CD4-positive, alpha-beta memory T cell (primary cell): ENCODE measurements at regions of chr6 and their contacts with region 1.

Region 1: GRCh38 chr6:3162565-3163247 is 5.4 kb upstream of the TUBB2A start:
- DNase-seq: peak; percentile 48 to 72 (median 55)
- H3K4me3 ChIP-seq: peak overlapping the region; percentile 53 to 61
- H3K4me3 Mint-ChIP-seq: peak overlapping the region; percentile 84 to 91 (median 85)
- H3K27ac ChIP-seq: peak overlapping the region; percentile 58
- H3K27ac Mint-ChIP-seq: peak overlapping the region; percentile 81 to 97 (median 87)
- H3K4me1 ChIP-seq: peaks cover 35% of the 10 kb centered on the region
- H3K4me1 Mint-ChIP-seq: peaks cover 27 to 49% (median 33%) of the 10 kb centered on the region in 4 donors
- H3K27me3 ChIP-seq: no peaks in the 10 kb centered on the region
- H3K27me3 Mint-ChIP-seq: peaks cover 0 to under 1% of the 10 kb centered on the region in 2 donors

Region 2: DNA sequence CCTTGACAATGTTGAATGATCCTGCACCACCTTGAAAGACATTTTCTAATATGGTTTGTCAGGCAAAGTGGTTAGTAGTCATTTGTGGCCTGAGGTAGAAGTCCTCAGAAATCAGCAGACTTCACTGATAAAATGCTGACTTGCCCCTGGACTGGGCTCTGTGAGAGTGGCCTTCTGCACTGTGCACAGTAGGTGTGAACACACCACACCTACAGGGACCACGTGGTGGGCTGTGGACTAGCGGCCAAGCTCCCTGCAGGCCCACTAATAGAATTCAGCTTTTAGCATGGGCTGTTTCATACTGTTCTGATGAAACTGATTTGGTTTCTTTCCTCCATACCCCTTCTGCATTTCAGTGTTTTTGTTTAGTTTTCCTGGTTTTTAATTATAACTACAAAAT is 36.9 kb before region 1 on chr6:
- CTCF ChIA-PET with region 1: interaction called, 6 read pairs
- POLR2A ChIA-PET with region 1: no interaction called
- intact Hi-C with region 1: loop called (anchors 1 kb)
- DNase-seq: no peak
- H3K4me3 ChIP-seq: no peak overlapping the region
- H3K4me3 Mint-ChIP-seq: no peak overlapping the region
- H3K27ac ChIP-seq: no peak overlapping the region
- H3K27ac Mint-ChIP-seq: no peak overlapping the region
- H3K4me1 ChIP-seq: no peaks in the 10 kb centered on the region
- H3K4me1 Mint-ChIP-seq: peaks cover 0 to 4% (median 0%) of the 10 kb centered on the region in 4 donors
- H3K27me3 ChIP-seq: no peaks in the 10 kb centered on the region
- H3K27me3 Mint-ChIP-seq: no peaks in the 10 kb centered on the region

Region 3: DNA sequence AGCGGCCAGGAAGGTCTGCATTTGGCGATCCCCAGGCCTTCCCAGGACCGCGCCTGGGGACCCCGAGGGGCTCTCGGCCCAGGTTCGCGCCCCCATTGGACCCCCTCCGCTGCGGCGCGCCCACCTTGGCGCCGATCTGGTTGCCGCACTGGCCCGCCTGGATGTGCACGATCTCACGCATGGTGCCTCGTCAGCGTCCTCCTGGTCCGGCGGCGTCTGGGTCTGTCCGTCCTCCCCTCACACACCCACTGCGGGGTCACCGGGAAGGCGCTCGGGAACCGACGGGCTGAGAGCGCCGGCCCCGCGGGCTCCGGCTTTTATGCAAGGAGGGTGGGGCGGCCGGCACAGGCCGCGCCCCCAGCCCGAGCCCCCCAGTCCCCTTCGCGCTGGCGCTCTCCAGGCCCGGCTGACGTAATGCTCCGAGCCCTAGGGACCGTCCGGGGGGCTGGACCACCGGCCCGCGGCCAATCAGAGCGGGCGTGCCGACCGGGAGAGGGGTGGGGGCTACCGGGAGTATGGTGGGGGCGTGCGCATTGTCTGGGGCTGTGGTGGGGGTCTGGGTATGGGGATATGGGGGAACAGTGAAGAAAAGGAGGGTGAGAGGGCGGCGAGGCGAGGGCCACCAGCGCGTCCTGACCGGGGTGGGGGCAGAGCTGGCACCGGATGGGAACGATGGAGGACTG is 64.8 kb after region 1 on chr6 and contains the start of gene TUBB2B:
- CTCF ChIA-PET with region 1: no interaction called
- POLR2A ChIA-PET with region 1: interaction called, 4 read pairs
- intact Hi-C with region 1: loop called (anchors 2 kb)
- DNase-seq: no peak
- H3K4me3 ChIP-seq: peak within 1 kb of the TSS; percentile 11 to 22
- H3K4me3 Mint-ChIP-seq: peak within 1 kb of the TSS; percentile 73 to 87 (median 78)
- H3K27ac ChIP-seq: no peak within 1 kb of the TSS
- H3K27ac Mint-ChIP-seq: peak within 1 kb of the TSS in 1 of 7 donors; percentile 83
- H3K4me1 ChIP-seq: peaks cover 57% of the 10 kb centered on the region
- H3K4me1 Mint-ChIP-seq: peaks cover 27 to 58% (median 46%) of the 10 kb centered on the region in 4 donors
- H3K27me3 ChIP-seq: peaks cover 47% of the 10 kb centered on the region
- H3K27me3 Mint-ChIP-seq: peaks cover 39 to 54% of the 10 kb centered on the region in 2 donors
- total RNA-seq, gene TUBB2B: not detected

Region 4: DNA sequence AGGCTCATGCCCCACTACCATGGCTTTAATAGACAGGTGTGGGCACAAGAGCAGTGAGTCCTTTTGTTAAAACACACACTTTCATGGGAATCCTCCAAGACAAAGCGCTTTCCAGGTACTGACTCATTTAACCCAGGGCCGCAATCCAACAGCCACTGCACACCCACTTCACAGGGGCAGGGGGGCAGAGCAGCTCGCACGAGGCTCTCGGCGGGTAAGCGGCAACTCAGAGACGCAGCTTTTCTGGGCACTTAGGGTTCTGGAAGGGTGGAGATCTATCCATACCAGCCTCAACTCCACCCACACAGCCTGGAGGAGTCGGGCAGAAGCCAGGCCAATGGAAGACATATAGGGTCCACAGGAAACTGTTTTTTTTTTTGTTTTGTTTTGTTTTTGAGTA is 124.6 kb after region 1 on chr6:
- CTCF ChIA-PET with region 1: no interaction called
- POLR2A ChIA-PET with region 1: no interaction called
- intact Hi-C with region 1: no loop called
- DNase-seq: no peak
- H3K4me3 ChIP-seq: no peak overlapping the region
- H3K4me3 Mint-ChIP-seq: no peak overlapping the region
- H3K27ac ChIP-seq: no peak overlapping the region
- H3K27ac Mint-ChIP-seq: peak overlapping the region in 1 of 7 donors; percentile 47
- H3K4me1 ChIP-seq: no peaks in the 10 kb centered on the region
- H3K4me1 Mint-ChIP-seq: peaks cover 0 to 5% (median 3%) of the 10 kb centered on the region in 4 donors
- H3K27me3 ChIP-seq: no peaks in the 10 kb centered on the region
- H3K27me3 Mint-ChIP-seq: no peaks in the 10 kb centered on the region